B cell (primary cell): ENCODE measurements at regions of chr6 and their contacts with region 1.

Region 1: DNA sequence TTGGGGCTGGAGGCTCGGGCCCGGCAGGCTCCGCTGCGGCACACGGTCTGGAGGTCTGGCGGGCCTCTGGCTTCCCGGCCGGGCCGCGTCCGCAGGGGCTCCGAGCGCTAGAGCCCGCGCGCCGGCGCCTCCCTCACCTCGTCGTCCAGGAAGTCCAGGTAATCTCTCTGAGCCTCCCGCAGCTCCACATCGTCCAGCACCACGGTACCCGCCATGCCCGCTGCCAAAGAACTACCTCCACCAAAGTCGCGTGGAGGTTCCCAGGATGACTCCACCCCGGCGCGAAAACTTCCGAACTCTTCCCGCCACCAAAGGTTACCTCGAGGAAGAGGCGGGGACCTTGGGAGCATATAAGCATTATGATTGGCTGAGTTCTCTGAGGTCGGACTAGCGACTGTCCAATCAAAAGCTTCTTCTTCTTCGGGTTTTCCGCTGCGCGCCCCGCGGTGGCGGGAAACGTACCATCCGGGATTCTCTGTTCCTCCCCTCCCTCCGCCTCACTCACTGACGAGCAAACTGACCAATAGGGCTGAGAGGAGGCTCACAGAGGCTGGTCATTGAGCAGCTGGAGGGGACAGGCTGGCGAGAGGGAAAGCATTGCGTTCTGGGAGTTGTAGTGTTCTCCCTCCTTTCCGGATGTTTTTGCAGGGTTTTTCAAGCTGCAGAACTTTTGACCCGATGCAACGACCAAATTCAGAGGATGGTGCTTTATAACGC is at the start of gene MCM3:
- DNase-seq: peak; percentile 98
- ATAC-seq: peak; percentile 97
- H3K4me3 ChIP-seq: peak within 1 kb of the TSS; percentile 67 to 83 (median 80)
- H3K4me3 Mint-ChIP-seq: peak within 1 kb of the TSS; percentile 72
- H3K27ac ChIP-seq: peak within 1 kb of the TSS; percentile 50 to 79
- H3K27ac Mint-ChIP-seq: no peak within 1 kb of the TSS
- H3K4me1 ChIP-seq: peaks cover 15 to 19% of the 10 kb centered on the region in 2 donors
- H3K4me1 Mint-ChIP-seq: peaks cover 22% of the 10 kb centered on the region
- H3K27me3 ChIP-seq: no peaks in the 10 kb centered on the region
- H3K27me3 Mint-ChIP-seq: no peaks in the 10 kb centered on the region
- CTCF ChIP-seq: peak; percentile 5
- total RNA-seq, gene MCM3: 58.5 and 60.0 TPM in 2 replicates

Region 2: DNA sequence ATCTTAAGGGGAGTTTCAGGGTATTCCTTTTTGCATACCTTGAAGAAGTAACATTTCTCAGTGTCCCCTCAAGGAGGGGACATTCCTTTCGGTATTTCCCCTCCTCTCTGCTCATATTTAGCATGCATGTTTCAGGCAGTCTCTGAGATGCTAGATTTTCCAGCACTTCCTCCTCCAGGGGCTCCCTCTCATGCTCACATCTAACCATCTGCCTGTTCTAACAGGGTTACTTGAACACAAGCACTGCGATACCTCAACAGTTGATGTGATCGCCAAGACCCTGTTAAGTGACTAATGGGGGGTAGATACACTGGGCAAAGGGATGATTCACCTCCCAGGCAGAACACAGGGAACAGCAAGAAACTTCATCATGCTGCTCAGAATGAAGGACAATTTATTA is 12.8 kb after region 1 on chr6:
- CTCF ChIA-PET with region 1: interaction called, 11 read pairs
- POLR2A ChIA-PET with region 1: interaction called, 5 read pairs
- intact Hi-C with region 1: loop called (anchors 1 kb)
- DNase-seq: peak; percentile 60
- ATAC-seq: peak; percentile 41
- H3K4me3 ChIP-seq: peak overlapping the region in 2 of 5 experiments; percentile 7 to 56
- H3K4me3 Mint-ChIP-seq: peak overlapping the region; percentile 73
- H3K27ac ChIP-seq: peak overlapping the region in 1 of 2 donors; percentile 13
- H3K27ac Mint-ChIP-seq: peak overlapping the region; percentile 95
- H3K4me1 ChIP-seq: peaks cover 21 to 33% of the 10 kb centered on the region in 2 donors
- H3K4me1 Mint-ChIP-seq: peaks cover 29% of the 10 kb centered on the region
- H3K27me3 ChIP-seq: no peaks in the 10 kb centered on the region
- H3K27me3 Mint-ChIP-seq: no peaks in the 10 kb centered on the region
- CTCF ChIP-seq: no peak

Region 3: DNA sequence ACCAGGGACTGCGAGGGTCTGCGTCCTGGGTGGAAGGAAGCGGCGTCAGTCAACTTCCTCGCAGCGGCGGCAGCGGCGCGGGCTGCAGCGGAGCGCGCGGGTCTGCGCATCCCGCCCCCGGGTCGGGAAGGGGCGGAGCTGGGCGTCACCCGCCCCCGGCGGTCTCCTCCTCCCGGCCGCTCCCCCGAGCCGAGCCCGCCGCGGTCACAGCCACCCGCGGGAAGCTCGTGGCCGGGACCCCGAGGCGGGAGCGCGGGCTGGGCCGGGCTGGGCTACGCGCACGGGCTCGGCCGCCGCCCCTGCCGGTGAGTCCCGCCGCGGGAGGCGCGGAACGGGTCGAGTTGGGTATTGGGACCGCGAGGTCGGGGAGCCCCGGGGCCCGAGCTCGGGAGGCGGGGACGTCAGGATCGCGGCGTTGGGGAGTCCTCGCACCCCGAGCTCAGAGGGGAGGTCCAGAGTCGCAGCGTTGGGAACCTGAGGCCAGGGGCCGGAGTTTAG is 77.4 kb after region 1 on chr6 and contains the start of gene PAQR8:
- CTCF ChIA-PET with region 1: interaction called, 96 read pairs
- POLR2A ChIA-PET with region 1: interaction called, 14 read pairs
- intact Hi-C with region 1: loop called (anchors 1 kb)
- DNase-seq: peak; percentile 88
- ATAC-seq: peak; percentile 90
- H3K4me3 ChIP-seq: peak within 1 kb of the TSS; percentile 54 to 100 (median 91)
- H3K4me3 Mint-ChIP-seq: peak within 1 kb of the TSS; percentile 96
- H3K27ac ChIP-seq: peak within 1 kb of the TSS; percentile 76 to 86
- H3K27ac Mint-ChIP-seq: peak within 1 kb of the TSS; percentile 92
- H3K4me1 ChIP-seq: peaks cover 14 to 17% of the 10 kb centered on the region in 2 donors
- H3K4me1 Mint-ChIP-seq: peaks cover 24% of the 10 kb centered on the region
- H3K27me3 ChIP-seq: no peaks in the 10 kb centered on the region
- H3K27me3 Mint-ChIP-seq: no peaks in the 10 kb centered on the region
- CTCF ChIP-seq: peak; percentile 5
- total RNA-seq, gene PAQR8: 8.5 and 8.9 TPM in 2 replicates

Region 4: GRCh38 chr6:52419809-52420670 is 135.4 kb after region 1 on chr6 and contains the start of gene EFHC1:
- CTCF ChIA-PET with region 1: interaction called, 79 read pairs
- POLR2A ChIA-PET with region 1: no interaction called
- intact Hi-C with region 1: loop called (anchors 1 kb)
- DNase-seq: peak; percentile 99
- ATAC-seq: peak; percentile 90
- H3K4me3 ChIP-seq: peak within 1 kb of the TSS; percentile 67 to 90 (median 86)
- H3K4me3 Mint-ChIP-seq: no peak within 1 kb of the TSS
- H3K27ac ChIP-seq: peak within 1 kb of the TSS; percentile 58 to 84
- H3K27ac Mint-ChIP-seq: no peak within 1 kb of the TSS
- H3K4me1 ChIP-seq: peaks cover 16 to 20% of the 10 kb centered on the region in 2 donors
- H3K4me1 Mint-ChIP-seq: peaks cover 11% of the 10 kb centered on the region
- H3K27me3 ChIP-seq: no peaks in the 10 kb centered on the region
- H3K27me3 Mint-ChIP-seq: peaks cover 1% of the 10 kb centered on the region
- CTCF ChIP-seq: no peak
- total RNA-seq, gene EFHC1: 34.8 and 45.7 TPM in 2 replicates

Region 5: GRCh38 chr6:52664186-52664990 is 379.8 kb after region 1 on chr6:
- CTCF ChIA-PET with region 1: interaction called, 20 read pairs
- POLR2A ChIA-PET with region 1: no interaction called
- intact Hi-C with region 1: loop called (anchors 1 kb)
- DNase-seq: peak; percentile 80
- ATAC-seq: peak; percentile 86
- H3K4me3 ChIP-seq: peak overlapping the region; percentile 58 to 83 (median 70)
- H3K4me3 Mint-ChIP-seq: no peak overlapping the region
- H3K27ac ChIP-seq: peak overlapping the region in 1 of 2 donors; percentile 16
- H3K27ac Mint-ChIP-seq: no peak overlapping the region
- H3K4me1 ChIP-seq: peaks cover 18 to 20% of the 10 kb centered on the region in 2 donors
- H3K4me1 Mint-ChIP-seq: peaks cover 12% of the 10 kb centered on the region
- H3K27me3 ChIP-seq: peaks cover 0 to 7% (median 0%) of the 10 kb centered on the region in 4 experiments
- H3K27me3 Mint-ChIP-seq: no peaks in the 10 kb centered on the region
- CTCF ChIP-seq: no peak

Region 6: GRCh38 chr6:53064726-53065215 is 780.2 kb after region 1 on chr6:
- CTCF ChIA-PET with region 1: no interaction called
- POLR2A ChIA-PET with region 1: no interaction called
- intact Hi-C with region 1: loop called (anchors 2 kb)
- DNase-seq: peak; percentile 96
- ATAC-seq: peak; percentile 82
- H3K4me3 ChIP-seq: peak overlapping the region; percentile 83 to 99 (median 84)
- H3K4me3 Mint-ChIP-seq: peak overlapping the region; percentile 100
- H3K27ac ChIP-seq: peak overlapping the region; percentile 61 to 76
- H3K27ac Mint-ChIP-seq: peak overlapping the region; percentile 99
- H3K4me1 ChIP-seq: peaks cover 38 to 40% of the 10 kb centered on the region in 2 donors
- H3K4me1 Mint-ChIP-seq: peaks cover 63% of the 10 kb centered on the region
- H3K27me3 ChIP-seq: no peaks in the 10 kb centered on the region
- H3K27me3 Mint-ChIP-seq: no peaks in the 10 kb centered on the region
- CTCF ChIP-seq: no peak